Panc1 (cell line): ENCODE measurements at regions of chr11 and their contacts with region 1.

Region 1: DNA sequence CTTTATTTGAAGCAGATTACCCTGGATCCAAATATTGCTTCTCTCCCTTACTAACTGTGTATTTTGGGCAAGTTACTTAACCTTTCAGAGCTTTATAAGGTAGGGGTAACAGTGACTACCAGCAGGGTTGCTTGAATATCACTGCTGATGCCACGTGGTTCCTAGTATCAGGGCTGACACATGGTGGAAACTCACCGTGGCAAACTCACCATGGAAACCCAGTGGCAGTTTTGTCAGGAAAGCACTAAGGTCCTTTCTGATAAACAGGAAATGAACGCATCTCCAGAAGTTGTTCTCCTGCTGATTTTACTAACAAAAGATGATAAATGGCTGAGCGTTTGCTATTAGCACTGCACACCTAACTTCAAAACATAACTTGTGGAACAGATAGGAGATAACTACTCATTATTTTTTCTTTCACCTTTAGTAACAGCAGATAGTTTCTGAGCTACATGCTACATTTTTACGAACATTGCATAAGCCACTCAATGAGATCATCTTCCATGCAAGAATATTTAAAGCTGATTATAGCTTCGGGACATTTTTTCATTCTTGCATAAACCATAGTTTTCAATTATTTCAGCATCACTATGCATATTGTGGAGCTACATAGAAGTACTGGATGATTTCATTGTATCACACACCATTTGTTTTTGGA is 59.7 kb upstream of the RAG2 start:
- DNase-seq: no peak
- ATAC-seq: no peak
- H3K4me3 ChIP-seq: no peak overlapping the region
- H3K27ac ChIP-seq: no peak overlapping the region
- H3K4me1 ChIP-seq: no peaks in the 10 kb centered on the region
- H3K27me3 ChIP-seq: no peaks in the 10 kb centered on the region
- CTCF ChIP-seq: no peak

Region 2: GRCh38 chr11:36684840-36685801 is 27.4 kb after region 1 on chr11:
- CTCF ChIA-PET with region 1: no interaction called
- POLR2A ChIA-PET with region 1: no interaction called
- in situ Hi-C with region 1: no loop called
- intact Hi-C with region 1: loop called (anchors 2 kb)
- DNase-seq: no peak
- ATAC-seq: no peak
- H3K4me3 ChIP-seq: no peak overlapping the region
- H3K27ac ChIP-seq: no peak overlapping the region
- H3K4me1 ChIP-seq: no peaks in the 10 kb centered on the region
- H3K27me3 ChIP-seq: 0 out of 2 replicates have a peak, but pooled peaks cover 6% of the 10 kb centered on the region
- CTCF ChIP-seq: no peak